Dorsolateral prefrontal cortex (tissue), 120 donors: ENCODE measurements at regions of chr20 and their contacts with region 1.

Region 1: GRCh38 chr20:1802385-1803060 is 92.7 kb upstream of the SIRPA start:
- DNase-seq: peak; percentile 77 to 93 (median 89)
- H3K4me3 ChIP-seq: peak overlapping the region; percentile 50 to 81 (median 69)
- H3K27ac ChIP-seq: peak overlapping the region; percentile 74 to 99 (median 96)
- H3K27me3 ChIP-seq: no peaks in the 10 kb centered on the region
- CTCF ChIP-seq: peak; percentile 45 to 89 (median 79)

Region 2: DNA sequence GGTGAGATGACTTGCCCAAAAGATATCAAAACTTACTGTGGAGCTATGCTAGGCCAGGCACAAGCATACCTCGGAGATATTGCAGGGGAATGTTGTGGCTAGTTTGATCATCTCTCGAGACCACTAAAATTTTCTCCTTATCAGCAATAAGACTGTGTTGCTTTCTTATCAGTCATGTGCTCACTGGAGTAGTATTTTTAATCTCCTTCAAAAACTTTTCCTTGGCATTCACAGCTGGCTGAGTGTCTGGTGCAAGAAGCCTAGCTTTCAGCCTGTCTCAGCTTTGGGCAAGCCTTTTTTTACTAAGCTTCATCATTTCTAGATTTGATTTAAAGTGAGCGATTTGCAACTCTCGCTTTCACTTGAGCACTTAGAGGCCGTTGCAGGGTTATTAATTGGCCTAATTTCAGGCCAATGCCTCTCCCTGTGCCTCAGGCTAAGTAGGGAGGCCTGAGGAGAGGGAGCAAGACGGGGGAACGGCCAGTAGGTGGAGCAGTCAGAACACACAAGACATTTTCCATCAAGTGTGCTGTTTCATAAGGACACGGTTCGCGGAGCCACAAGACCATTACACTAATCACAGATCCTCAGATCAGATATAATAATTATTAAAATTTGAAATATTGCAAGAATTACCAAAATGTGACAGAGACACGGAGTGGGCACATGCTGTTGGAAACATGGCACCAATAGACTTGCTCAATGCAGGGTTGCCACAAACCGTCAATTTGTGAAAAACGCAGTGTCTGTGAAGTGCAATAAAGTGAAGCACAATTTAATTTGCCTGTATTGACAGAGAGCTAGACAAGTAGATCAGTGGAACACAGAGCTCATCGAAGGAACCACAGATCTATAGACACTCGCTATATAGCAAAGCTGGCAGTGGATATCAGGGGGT is 38.1 kb before region 1 on chr20:
- intact Hi-C with region 1: loop called in 1 of 2 experiments (anchors 5 kb)
- DNase-seq: peak; percentile 65 to 92 (median 81)
- H3K4me3 ChIP-seq: peak overlapping the region in 21 of 59 donors; percentile 2 to 41 (median 29)
- H3K27ac ChIP-seq: peak overlapping the region in 2 of 59 donors; percentile 3 to 34
- H3K27me3 ChIP-seq: no peaks in the 10 kb centered on the region
- CTCF ChIP-seq: peak; percentile 62 to 96 (median 84)

Region 3: GRCh38 chr20:1776681-1777475 is 25.6 kb before region 1 on chr20:
- intact Hi-C with region 1: loop called (anchors 1 to 2 kb)
- DNase-seq: peak; percentile 79 to 93 (median 88)
- H3K4me3 ChIP-seq: peak overlapping the region; percentile 48 to 83 (median 69)
- H3K27ac ChIP-seq: peak overlapping the region in 54 of 59 donors; percentile 12 to 94 (median 75)
- H3K27me3 ChIP-seq: no peaks in the 10 kb centered on the region
- CTCF ChIP-seq: peak; percentile 73 to 93 (median 85)

Region 4: DNA sequence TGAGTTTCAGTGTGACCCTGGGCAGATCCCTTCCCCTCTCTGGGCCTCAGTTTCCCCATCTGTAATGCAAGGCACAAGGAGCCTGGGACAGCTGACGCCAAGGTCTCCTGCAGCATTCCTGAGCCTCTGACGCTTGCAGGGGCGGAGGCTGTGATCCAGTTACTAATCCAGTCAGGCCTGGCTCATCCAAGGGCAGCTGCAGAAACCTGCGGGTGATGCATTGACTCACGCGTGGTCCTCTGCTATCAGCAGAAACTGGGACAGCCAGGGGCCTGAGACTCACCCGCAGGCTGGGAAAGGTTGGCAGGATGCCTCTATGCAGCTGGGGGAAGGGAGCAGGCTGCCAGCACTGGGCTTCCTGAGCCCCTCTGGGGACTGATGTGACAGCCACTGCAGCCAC is 27.7 kb after region 1 on chr20:
- intact Hi-C with region 1: loop called in 1 of 2 experiments (anchors 1 kb)
- DNase-seq: peak; percentile 35 to 94 (median 81)
- H3K4me3 ChIP-seq: peak overlapping the region in 1 of 59 donors; percentile 8
- H3K27ac ChIP-seq: peak overlapping the region; percentile 60 to 100 (median 97)
- H3K27me3 ChIP-seq: no peaks in the 10 kb centered on the region
- CTCF ChIP-seq: no peak

Region 5: GRCh38 chr20:1860446-1860845 is 57.9 kb after region 1 on chr20:
- intact Hi-C with region 1: no loop called
- DNase-seq: no peak
- H3K4me3 ChIP-seq: peak overlapping the region in 1 of 59 donors; percentile 11
- H3K27ac ChIP-seq: peak overlapping the region in 36 of 59 donors; percentile 3 to 92 (median 56)
- H3K27me3 ChIP-seq: no peaks in the 10 kb centered on the region
- CTCF ChIP-seq: no peak

Region 6: GRCh38 chr20:1894951-1895673 is 92.6 kb after region 1 on chr20 and contains the start of gene SIRPA:
- intact Hi-C with region 1: loop called (anchors 1 kb)
- DNase-seq: peak; percentile 57 to 82 (median 73)
- H3K4me3 ChIP-seq: peak within 1 kb of the TSS; percentile 59 to 98 (median 84)
- H3K27ac ChIP-seq: peak within 1 kb of the TSS; percentile 88 to 100 (median 99)
- H3K27me3 ChIP-seq: no peaks in the 10 kb centered on the region
- CTCF ChIP-seq: peak in 1 of 56 donors; percentile 17
- total RNA-seq, gene SIRPA: 164 to 389 (median 265) TPM

Region 7: DNA sequence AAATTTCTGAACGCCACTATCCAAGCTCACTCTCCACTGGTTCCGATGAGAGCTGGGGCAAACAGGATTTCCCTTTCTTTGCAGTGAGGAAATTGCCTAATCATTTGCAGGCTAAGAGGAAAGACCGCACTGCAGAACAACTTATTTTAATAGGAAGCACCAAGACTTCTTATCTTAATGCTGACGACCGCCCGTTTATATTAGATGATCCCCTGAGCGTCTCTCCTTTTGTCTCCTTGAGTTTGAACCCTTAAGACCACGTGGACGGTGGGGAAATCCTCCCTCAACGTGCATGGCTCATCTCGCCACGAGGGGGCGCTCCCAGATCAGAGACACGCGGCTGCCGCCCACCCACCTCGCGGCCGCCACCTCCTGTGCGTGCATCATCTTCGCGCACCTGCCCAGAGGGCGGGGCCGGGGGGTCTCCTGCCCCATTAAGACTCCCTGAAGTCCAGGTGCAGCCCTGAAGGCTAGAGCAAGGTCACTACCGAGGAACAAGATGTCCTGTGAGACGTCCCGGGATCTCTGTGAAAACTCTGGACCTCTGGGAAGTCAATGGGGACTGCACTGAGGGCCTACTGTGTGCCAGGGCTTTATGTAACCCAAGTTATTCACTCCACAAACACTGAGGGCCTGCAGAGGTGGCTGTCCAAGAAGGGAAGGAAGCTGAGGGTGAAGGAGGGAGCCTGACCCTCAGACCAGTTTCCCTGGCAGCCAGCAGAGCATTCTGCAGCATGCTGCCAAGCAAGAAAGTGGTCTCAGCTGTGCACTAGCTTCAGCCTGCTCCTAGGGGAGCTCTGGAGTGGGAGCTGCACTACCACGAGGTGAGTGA is 163.2 kb after region 1 on chr20:
- intact Hi-C with region 1: loop called in 1 of 2 experiments (anchors 5 kb)
- DNase-seq: peak; percentile 67 to 85 (median 82)
- H3K4me3 ChIP-seq: peak overlapping the region in 55 of 59 donors; percentile 2 to 58 (median 35)
- H3K27ac ChIP-seq: peak overlapping the region in 17 of 59 donors; percentile 1 to 64 (median 17)
- H3K27me3 ChIP-seq: no peaks in the 10 kb centered on the region
- CTCF ChIP-seq: peak; percentile 86 to 99 (median 96)

Region 8: DNA sequence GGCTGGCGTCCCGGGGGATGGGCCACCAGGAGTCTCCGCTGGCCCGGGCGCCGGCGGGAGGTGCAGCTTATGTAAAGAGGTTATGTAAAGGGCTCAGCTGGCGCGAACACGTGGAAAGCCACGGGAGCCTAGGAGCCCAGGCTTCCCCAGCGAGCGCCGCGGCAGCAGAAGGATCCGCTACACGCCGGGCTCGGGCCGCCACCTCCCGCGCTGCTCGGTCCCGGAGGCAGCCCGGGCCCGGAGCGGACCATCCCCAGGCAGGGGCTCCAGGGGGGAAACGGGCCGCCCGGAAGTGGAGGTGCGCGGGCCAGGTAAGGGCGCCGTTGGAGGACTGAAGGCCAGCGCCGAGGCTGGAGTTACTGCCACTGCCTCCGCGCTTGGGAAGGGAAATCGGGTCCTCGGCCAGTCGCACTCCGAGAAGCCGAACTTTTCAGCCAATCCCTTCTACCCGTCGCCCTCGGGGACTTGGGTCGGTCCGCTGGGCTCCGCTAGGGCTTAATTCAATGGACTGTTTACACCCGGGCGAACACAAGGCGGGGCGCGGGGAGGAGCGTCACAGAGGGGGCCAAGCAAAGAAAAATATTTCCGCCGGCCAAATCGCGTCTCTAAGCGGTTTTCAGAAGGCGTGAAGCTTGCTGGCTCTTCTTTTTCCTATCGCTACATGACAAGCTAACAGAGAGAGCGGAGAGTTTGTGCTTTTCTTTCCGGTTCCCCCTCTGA is 299.5 kb after region 1 on chr20:
- intact Hi-C with region 1: loop called (anchors 10 kb)
- DNase-seq: peak; percentile 84 to 92 (median 90)
- H3K4me3 ChIP-seq: peak overlapping the region; percentile 64 to 99 (median 93)
- H3K27ac ChIP-seq: peak overlapping the region; percentile 96 to 100 (median 100)
- H3K27me3 ChIP-seq: no peaks in the 10 kb centered on the region
- CTCF ChIP-seq: peak in 15 of 56 donors; percentile 4 to 40 (median 12)